ENCODE measurements at regions of chr11 and their contacts with region 1.

Region 1: DNA sequence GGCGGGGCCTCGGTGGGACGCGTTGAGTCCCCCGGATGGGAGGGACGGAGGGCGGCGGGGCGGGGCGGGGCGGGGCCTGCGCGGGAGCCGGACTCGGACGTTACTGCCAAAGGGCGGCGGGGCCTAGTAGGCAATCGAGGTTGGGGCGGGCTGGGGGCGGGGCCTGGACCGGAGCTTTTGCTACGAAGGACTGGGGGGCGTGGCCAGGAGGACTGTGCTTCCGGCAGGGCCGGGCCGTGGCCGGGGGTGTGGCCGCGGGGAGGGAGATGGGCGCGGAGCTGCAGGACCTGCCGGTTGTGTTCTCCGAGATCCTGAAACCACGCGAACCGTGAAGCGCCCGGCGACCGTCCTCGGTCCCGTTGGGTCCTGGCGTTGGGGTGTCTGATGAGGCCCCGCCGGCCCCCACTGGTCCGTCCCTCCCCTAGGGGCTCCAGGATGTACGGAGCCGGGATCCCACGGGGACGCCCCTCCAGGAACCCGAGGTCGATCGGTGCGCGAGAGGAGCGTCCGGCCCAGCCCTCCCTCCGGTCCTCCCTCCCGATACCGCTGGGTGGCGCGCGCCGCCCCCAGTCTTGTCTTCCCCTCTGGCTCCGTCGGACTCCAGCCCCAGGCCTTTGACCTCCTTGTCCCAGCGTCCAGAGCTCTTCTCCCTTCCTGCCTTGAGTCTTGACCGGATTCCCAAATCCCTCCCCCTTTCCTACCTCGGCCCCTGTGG is 648 bp upstream of the NUDT8 start:
- DNase-seq: peak; percentile 100
- H3K4me3 ChIP-seq: peak overlapping the region; percentile 88
- H3K4me3 Mint-ChIP-seq: peak overlapping the region; percentile 76
- H3K27ac Mint-ChIP-seq: peak overlapping the region; percentile 86
- H3K4me1 ChIP-seq: peaks cover 11% of the 10 kb centered on the region
- H3K4me1 Mint-ChIP-seq: peaks cover 7% of the 10 kb centered on the region
- H3K27me3 ChIP-seq: no peaks in the 10 kb centered on the region
- H3K27me3 Mint-ChIP-seq: no peaks in the 10 kb centered on the region
- CTCF ChIP-seq: peak; percentile 97 to 98

Region 2: DNA sequence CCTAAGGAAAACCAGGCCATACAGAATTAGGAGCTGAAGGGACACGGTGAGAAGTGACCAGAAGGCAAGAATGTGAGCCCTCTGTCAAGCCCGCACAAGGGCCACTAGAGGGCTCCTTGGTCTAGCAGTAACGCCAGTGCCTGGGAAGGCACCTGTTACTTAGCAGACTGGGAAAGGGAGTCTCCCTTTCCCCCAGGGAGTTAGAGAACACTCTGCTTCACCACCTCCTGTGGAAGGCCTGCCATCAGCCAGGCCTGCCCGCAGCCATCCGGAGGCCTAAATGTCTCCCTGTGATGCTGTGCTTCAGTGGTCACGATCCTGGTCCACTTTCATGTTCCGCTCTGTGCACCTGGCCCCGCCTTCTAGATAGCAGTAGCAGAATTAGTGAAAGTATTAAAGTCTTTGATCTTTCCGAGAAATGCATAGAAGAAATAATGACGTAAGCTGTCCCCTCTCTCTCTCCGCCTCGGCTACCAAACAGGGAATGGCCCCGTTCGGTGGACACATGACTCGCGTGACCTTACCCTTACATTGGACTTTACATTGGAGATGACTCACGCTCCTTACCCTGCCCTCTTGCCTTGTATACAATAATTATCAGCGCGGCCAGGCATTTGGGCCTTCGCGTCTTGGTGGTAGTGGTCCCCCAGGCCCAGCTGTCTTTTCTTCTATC is 57.5 kb before region 1 on chr11:
- CTCF ChIA-PET with region 1: interaction called, 12 read pairs
- POLR2A ChIA-PET with region 1: no interaction called
- intact Hi-C with region 1: loop called (anchors 1 kb)
- DNase-seq: peak; percentile 89 to 91
- H3K4me3 ChIP-seq: peak overlapping the region; percentile 28
- H3K4me3 Mint-ChIP-seq: peak overlapping the region; percentile 69
- H3K27ac Mint-ChIP-seq: peak overlapping the region; percentile 91
- H3K4me1 ChIP-seq: peaks cover 20% of the 10 kb centered on the region
- H3K4me1 Mint-ChIP-seq: peaks cover 30% of the 10 kb centered on the region
- H3K27me3 ChIP-seq: no peaks in the 10 kb centered on the region
- H3K27me3 Mint-ChIP-seq: no peaks in the 10 kb centered on the region
- CTCF ChIP-seq: peak; percentile 97

Region 3: DNA sequence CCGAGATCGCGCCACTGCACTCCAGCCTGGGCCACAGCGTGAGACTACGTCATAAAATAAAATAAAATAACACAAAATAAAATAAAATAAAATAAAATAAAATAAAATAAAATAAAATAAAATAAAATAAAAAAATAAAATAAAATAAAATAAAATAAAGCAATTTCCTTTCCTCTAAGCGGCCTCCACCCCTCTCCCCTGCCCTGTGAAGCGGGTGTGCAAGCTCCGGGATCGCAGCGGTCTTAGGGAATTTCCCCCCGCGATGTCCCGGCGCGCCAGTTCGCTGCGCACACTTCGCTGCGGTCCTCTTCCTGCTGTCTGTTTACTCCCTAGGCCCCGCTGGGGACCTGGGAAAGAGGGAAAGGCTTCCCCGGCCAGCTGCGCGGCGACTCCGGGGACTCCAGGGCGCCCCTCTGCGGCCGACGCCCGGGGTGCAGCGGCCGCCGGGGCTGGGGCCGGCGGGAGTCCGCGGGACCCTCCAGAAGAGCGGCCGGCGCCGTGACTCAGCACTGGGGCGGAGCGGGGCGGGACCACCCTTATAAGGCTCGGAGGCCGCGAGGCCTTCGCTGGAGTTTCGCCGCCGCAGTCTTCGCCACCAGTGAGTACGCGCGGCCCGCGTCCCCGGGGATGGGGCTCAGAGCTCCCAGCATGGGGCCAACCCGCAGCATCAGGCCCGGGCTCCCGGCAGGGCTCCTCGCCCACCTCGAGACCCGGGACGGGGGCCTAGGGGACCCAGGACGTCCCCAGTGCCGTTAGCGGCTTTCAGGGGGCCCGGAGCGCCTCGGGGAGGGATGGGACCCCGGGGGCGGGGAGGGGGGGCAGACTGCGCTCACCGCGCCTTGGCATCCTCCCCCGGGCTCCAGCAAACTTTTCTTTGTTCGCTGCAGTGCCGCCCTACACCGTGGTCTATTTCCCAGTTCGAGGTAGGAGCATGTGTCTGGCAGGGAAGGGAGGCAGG is 46.9 kb before region 1 on chr11 and contains the start of gene GSTP1:
- CTCF ChIA-PET with region 1: interaction called, 10 read pairs
- POLR2A ChIA-PET with region 1: interaction called, 6 read pairs
- intact Hi-C with region 1: no loop called
- DNase-seq: peak; percentile 93 to 98
- H3K4me3 ChIP-seq: peak within 1 kb of the TSS; percentile 87
- H3K4me3 Mint-ChIP-seq: peak within 1 kb of the TSS; percentile 75
- H3K27ac Mint-ChIP-seq: peak within 1 kb of the TSS; percentile 85
- H3K4me1 ChIP-seq: peaks cover 48% of the 10 kb centered on the region
- H3K4me1 Mint-ChIP-seq: peaks cover 61% of the 10 kb centered on the region
- H3K27me3 ChIP-seq: no peaks in the 10 kb centered on the region
- H3K27me3 Mint-ChIP-seq: no peaks in the 10 kb centered on the region
- CTCF ChIP-seq: peak; percentile 62 to 93
- total RNA-seq, gene GSTP1: 1,799 and 1,911 TPM in 2 replicates

Region 4: GRCh38 chr11:67649634-67650510 is 19.5 kb after region 1 on chr11:
- CTCF ChIA-PET with region 1: interaction called, 20 read pairs
- POLR2A ChIA-PET with region 1: interaction called, 7 read pairs
- intact Hi-C with region 1: no loop called
- DNase-seq: no peak
- H3K4me3 ChIP-seq: 0 out of 2 replicates have a peak overlapping the region, but pooled peaks have one; percentile 2
- H3K4me3 Mint-ChIP-seq: peak overlapping the region; percentile 12
- H3K27ac Mint-ChIP-seq: peak overlapping the region; percentile 34
- H3K4me1 ChIP-seq: peaks cover 15% of the 10 kb centered on the region
- H3K4me1 Mint-ChIP-seq: peaks cover 26% of the 10 kb centered on the region
- H3K27me3 ChIP-seq: no peaks in the 10 kb centered on the region
- H3K27me3 Mint-ChIP-seq: no peaks in the 10 kb centered on the region
- CTCF ChIP-seq: no peak

Region 5: DNA sequence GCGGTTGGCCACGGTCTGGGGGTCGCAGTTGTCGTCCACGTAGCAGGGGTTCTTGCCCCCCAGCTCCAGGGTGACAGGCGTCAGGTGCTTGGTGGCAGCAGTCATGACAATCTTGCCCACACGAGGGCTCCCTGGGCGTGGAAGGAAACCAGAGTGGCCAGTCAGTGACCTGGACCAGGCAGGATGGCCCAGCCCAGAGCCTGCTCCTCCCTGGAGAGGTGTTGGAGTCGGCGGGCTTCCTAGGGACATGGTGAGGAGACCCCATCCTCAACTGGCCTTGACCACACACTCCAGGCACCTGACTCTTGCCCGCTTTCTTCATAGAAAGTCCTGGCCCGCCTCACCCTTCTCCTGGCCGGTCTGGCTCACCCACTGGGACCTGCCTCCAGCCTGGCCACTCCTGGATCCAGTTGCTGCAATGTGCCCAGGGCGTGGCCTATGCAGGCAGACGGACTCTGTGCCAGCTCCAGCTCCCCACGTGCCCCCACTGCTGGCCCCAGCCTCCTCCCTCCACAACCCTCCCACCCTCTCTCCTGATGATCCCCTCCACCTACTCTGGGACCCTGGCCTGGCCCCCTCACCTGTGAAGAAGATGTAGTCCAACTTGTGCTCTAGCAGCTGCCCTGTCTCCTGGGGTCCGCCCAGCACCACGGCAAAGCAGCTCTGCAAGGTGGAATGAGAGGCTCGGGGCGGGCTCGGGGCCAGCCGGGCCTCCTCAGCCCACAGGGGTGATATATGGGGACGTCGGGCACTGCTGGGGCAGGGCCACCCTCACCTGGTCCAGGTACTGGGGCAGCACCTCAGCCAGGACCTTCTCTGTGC is 35.4 kb after region 1 on chr11:
- CTCF ChIA-PET with region 1: interaction called, 51 read pairs
- POLR2A ChIA-PET with region 1: no interaction called
- intact Hi-C with region 1: no loop called
- DNase-seq: peak; percentile 74 to 80
- H3K4me3 ChIP-seq: no peak overlapping the region
- H3K4me3 Mint-ChIP-seq: no peak overlapping the region
- H3K27ac Mint-ChIP-seq: no peak overlapping the region
- H3K4me1 ChIP-seq: no peaks in the 10 kb centered on the region
- H3K4me1 Mint-ChIP-seq: no peaks in the 10 kb centered on the region
- H3K27me3 ChIP-seq: no peaks in the 10 kb centered on the region
- H3K27me3 Mint-ChIP-seq: no peaks in the 10 kb centered on the region
- CTCF ChIP-seq: peak; percentile 68 to 77

Measured in Caco-2 (cell line).